ENCODE measurements at regions of chr17 and their contacts with region 1.

Region 1: DNA sequence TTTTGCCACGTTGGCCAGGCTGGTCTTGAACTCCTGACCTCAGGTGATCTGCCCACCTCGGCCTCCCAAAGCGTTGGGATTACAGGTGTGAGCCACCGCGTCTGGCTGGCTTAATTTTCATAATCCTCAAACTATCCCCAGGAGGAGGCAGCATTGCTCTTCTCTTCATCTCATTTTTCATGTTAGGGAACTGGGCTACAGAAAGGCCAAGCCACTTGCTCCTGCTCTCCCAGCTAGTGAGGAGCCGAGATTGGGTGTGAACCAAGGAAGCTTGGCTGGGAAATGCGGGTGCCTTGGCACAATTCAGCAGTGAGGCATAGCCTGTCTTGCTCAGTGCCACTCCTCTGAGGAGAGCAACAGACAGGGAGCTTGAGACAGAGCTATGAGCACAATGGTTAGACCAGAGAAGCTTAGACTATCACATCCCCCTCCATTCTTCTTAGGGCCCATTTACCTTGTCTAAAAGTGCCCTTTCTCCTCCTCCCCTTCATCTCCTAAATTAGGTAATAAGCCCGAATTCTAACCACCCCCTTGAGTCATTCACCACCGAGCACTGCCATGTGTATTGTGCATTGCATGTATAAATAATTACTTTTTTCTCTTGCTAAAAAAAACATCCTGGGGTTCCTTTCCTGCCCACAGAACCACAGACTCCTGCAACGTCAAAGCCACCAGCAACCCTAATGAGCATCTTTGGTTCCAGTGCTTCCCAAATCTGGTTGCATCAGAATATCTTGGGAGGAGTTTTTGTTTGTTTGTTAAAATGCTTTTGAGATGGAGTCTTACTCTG is 20.0 kb upstream of the KIF19 start:
- DNase-seq: peak; percentile 40
- H3K4me3 Mint-ChIP-seq: no peak overlapping the region
- H3K27ac Mint-ChIP-seq: no peak overlapping the region
- H3K4me1 Mint-ChIP-seq: peaks cover 30% of the 10 kb centered on the region
- H3K27me3 Mint-ChIP-seq: peaks cover 4% of the 10 kb centered on the region

Region 2: DNA sequence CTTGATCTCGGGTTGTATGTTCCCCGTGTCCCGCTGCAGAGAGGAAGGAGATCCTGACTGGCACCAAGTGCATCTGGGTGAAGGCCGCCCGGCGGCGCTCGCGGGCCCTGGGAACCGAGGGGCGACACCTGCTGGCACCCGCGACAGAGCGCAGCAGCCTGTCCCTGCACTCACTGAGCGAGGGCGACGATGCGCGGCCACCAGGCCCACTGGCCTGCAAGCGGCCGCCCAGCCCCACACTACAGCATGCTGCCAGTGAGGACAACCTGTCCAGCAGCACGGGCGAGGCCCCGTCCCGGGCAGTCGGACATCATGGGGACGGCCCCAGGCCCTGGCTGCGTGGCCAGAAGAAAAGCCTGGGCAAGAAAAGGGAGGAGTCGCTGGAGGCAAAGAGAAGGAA is 48.1 kb after region 1 on chr17:
- CTCF ChIA-PET with region 1: interaction called, 75 read pairs
- POLR2A ChIA-PET with region 1: no interaction called
- DNase-seq: peak; percentile 76
- H3K4me3 Mint-ChIP-seq: no peak overlapping the region
- H3K27ac Mint-ChIP-seq: no peak overlapping the region
- H3K4me1 Mint-ChIP-seq: peaks cover 7% of the 10 kb centered on the region
- H3K27me3 Mint-ChIP-seq: peaks cover 67% of the 10 kb centered on the region

Region 3: DNA sequence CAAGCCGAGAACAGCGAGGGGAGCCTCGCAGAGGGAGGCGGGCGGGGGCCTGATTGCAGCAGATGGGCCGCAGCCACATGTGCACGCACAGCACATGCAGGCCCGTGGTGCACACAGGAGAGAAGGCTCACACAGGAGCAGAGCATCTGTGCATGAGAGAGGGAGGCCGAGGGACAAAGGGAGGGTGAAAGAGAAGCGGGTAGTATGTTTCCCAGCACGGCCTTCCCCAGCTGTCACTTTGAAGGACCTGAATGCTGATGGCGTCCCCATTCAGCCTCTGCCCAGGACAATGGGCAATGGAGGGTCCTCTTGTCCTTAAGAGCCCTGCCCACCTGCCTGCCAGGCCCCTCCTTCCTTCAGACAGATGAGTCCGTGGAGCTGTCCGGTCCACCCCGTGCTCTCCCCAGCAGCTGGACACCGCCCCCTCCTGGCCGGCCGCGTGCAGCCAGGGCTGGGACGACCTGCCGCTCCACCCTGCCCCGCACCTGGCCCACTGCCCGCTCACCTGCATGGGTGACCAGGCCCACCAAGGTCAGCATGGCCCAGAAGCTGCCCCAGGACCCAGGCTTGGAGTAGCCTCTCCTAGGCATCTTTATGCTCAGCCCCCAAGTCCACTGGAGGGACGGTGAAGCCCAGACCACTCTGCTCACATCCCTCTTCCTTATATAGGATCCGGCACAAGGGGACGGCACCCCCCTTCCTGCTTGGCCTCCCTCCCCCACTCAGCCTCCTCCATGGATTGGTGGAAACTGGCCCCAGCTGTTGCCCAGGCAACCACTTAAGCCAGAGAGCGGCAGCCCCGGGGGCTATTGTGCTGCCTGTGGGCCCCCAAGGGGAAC is 55.4 kb after region 1 on chr17 and contains the start of gene BTBD17:
- CTCF ChIA-PET with region 1: interaction called, 75 read pairs
- POLR2A ChIA-PET with region 1: interaction called, 3 read pairs
- DNase-seq: peak; percentile 48
- H3K4me3 Mint-ChIP-seq: no peak within 1 kb of the TSS
- H3K27ac Mint-ChIP-seq: no peak within 1 kb of the TSS
- H3K4me1 Mint-ChIP-seq: peaks cover 3% of the 10 kb centered on the region
- H3K27me3 Mint-ChIP-seq: peaks cover 24% of the 10 kb centered on the region
- total RNA-seq, gene BTBD17: 0.18 TPM in 1 of 2 experiments, not detected in the other

Measured in activated CD4-positive, alpha-beta memory T cell treated with anti-CD3 and anti-CD28 coated beads, Interleukin-2, amount 10 ng/mL, durations not matched to agents 7 days and 5 days (primary cell).